A549 (cell line): ENCODE measurements at regions of chr11 and their contacts with region 1.

Region 1: DNA sequence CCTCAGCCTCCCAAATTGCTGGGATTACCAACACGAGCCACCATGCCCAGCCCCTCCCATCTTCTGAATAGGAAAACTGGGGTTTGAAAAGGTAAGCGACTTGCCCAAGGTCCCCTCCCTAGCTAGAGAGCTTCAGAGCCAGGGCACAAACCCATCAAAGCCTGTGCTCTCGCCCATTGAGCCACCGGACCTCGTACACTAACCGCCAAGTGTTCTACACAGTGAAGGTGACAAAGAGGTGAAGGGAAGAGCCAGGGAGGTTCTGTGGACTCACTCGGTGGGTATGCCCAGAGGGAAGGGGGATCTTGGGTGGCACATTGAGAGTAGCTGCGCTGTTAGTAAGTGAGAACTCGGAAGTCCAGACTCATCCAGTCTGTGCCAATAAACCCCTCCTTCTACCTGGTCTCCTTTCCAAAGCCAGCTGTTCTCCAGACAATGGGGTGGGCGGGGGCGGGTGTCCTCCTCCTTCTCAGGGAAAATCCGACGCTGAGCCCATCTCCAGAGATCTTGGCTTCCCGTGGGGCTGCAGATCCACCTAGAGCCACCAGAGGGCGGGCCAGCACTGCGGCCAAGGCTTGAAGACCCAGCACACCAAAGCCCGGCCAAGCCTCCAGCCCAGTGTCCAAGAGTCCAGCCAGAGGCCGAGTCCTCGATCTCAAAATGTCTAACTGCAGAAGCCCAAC is 3.2 kb upstream of the RTN4RL2 start:
- DNase-seq: peak; percentile 80 to 91
- ATAC-seq: peak; percentile 48 to 77
- H3K4me3 ChIP-seq: no peak overlapping the region
- H3K27ac ChIP-seq: peak overlapping the region; percentile 81 to 89
- H3K4me1 ChIP-seq: peaks cover 39% of the 10 kb centered on the region
- CTCF ChIP-seq: peak; percentile 86
- EP300 ChIP-seq: no peak
- POLR2A ChIP-seq: no peak
- RAD21 ChIP-seq: peak; percentile 89 to 90

Region 2: DNA sequence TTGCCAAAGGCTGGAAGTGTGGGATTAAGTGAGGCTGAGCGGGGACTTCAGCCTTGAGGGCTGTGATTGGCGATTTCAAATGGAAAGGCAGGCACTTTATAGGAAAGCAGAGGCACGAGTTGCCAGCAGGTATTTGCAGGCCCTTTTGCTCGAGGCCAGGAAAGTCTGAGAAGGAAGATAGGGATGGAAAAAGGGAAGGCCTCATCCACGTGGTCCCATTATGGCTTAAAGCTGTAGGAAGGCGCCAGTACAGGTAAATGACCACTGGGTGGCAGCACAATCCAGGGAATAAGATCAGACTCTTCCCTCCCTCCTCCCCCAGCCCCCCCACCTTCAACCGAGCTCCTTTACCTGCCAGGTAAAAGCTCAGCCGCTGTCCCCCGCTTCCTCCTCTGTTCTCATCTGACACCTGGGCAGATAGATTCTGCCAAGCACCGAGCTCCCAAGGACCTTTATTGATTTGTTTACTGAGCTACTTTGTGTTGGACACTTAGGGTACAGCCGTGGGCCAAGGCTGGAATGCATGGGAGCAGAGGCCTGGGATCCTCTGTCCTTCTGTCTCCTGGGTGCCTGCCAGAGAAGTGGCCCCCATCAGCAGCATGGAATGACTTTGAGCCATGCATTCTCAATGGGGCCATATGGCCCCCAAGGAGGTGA is 111.4 kb before region 1 on chr11:
- CTCF ChIA-PET with region 1: interaction called, 59 read pairs
- POLR2A ChIA-PET with region 1: no interaction called
- DNase-seq: peak; percentile 81 to 84
- ATAC-seq: peak; percentile 66 to 78
- H3K4me3 ChIP-seq: no peak overlapping the region
- H3K27ac ChIP-seq: peak overlapping the region; percentile 50 to 75; a peak in 5 of 6 replicates
- H3K4me1 ChIP-seq: peaks cover 18% of the 10 kb centered on the region
- CTCF ChIP-seq: peak; percentile 91
- EP300 ChIP-seq: no peak
- POLR2A ChIP-seq: no peak
- RAD21 ChIP-seq: peak; percentile 82 to 97

Region 3: GRCh38 chr11:57399221-57399620 is 57.9 kb before region 1 on chr11:
- CTCF ChIA-PET with region 1: interaction called, 12 read pairs
- POLR2A ChIA-PET with region 1: no interaction called
- DNase-seq: no peak
- ATAC-seq: no peak
- H3K4me3 ChIP-seq: no peak overlapping the region
- H3K27ac ChIP-seq: no peak overlapping the region
- H3K4me1 ChIP-seq: peaks cover 14% of the 10 kb centered on the region
- CTCF ChIP-seq: no peak
- EP300 ChIP-seq: no peak
- POLR2A ChIP-seq: no peak
- RAD21 ChIP-seq: no peak

Region 4: GRCh38 chr11:57432714-57433163 is 24.4 kb before region 1 on chr11:
- CTCF ChIA-PET with region 1: interaction called, 37 read pairs
- POLR2A ChIA-PET with region 1: no interaction called
- DNase-seq: no peak
- ATAC-seq: no peak
- H3K4me3 ChIP-seq: no peak overlapping the region
- H3K27ac ChIP-seq: peak overlapping the region; percentile 70 to 80; a peak in 4 of 6 replicates
- H3K4me1 ChIP-seq: peaks cover 37% of the 10 kb centered on the region
- CTCF ChIP-seq: no peak
- EP300 ChIP-seq: no peak
- POLR2A ChIP-seq: no peak
- RAD21 ChIP-seq: no peak

Region 5: GRCh38 chr11:57480409-57481137 is 23.5 kb after region 1 on chr11:
- CTCF ChIA-PET with region 1: interaction called, 228 read pairs
- POLR2A ChIA-PET with region 1: interaction called, 7 read pairs
- DNase-seq: peak; percentile 77 to 91
- ATAC-seq: peak; percentile 72 to 76
- H3K4me3 ChIP-seq: no peak overlapping the region
- H3K27ac ChIP-seq: peak overlapping the region in 1 of 2 experiments; percentile 45; a peak in 2 of 6 replicates
- H3K4me1 ChIP-seq: peaks cover 50% of the 10 kb centered on the region
- CTCF ChIP-seq: peak; percentile 73
- EP300 ChIP-seq: no peak
- POLR2A ChIP-seq: no peak
- RAD21 ChIP-seq: peak; percentile 60 to 69

Region 6: GRCh38 chr11:57530596-57531507 is 73.8 kb after region 1 on chr11 and contains the start of gene TIMM10:
- CTCF ChIA-PET with region 1: interaction called, 220 read pairs
- POLR2A ChIA-PET with region 1: no interaction called
- DNase-seq: peak; percentile 95 to 99
- ATAC-seq: peak; percentile 95 to 99
- H3K4me3 ChIP-seq: peak within 1 kb of the TSS; percentile 68
- H3K27ac ChIP-seq: peak within 1 kb of the TSS; percentile 75 to 89
- H3K4me1 ChIP-seq: peaks cover 12% of the 10 kb centered on the region
- CTCF ChIP-seq: no peak
- EP300 ChIP-seq: no peak
- POLR2A ChIP-seq: peak; percentile 18; the same call in 1 of the 2 replicates
- RAD21 ChIP-seq: no peak
- polyA plus RNA-seq, gene TIMM10: 248 and 249 TPM in 2 replicates